ENCODE measurements at regions of chr5 and their contacts with region 1.

Region 1: DNA sequence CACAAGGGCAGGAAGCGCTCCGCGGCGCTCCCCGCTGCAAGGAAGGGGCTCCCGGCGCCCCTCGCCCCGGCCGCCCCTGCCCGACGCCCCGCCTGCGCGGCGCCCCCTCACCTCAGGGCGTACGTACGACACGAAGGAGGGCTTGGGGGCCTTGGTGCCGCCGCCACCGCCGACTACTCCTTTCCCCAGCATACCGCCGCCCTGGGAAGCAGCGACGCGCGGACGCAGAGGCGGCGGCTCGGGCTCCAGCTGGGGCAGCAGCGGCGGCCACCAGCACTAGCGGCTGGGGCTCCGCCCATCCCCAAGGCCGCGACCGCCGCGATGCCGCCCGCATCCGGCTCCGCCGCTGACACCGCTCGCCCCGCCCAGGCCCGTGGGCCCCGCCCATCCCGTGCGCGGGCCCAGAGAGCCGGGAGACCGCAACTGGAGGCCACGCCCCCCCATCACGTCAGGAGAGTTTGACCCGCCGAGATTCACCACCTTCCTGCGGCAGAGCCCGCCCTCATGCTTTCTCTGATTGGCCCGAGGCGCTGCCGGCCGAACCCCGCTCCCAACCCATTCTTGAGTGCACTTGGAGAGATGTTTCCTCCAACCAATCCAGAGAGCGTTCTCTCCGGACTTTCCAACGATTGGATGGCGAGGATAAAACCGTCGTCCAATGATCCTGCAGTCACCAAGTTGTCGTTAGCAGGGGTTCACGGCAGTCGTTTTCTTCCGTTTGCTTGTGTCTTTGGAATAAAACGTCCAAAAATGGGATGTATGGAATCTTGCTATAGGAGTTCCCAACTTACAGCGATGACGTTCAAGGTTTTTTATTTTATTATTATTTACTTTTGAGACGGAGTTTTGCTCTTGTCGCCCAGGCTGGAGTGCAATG is at the start of gene MTMR12:
- DNase-seq: peak; percentile 99 to 100 (median 100)
- H3K4me3 ChIP-seq: peak within 1 kb of the TSS; percentile 59 to 77
- H3K4me3 Mint-ChIP-seq: peak within 1 kb of the TSS; percentile 91 to 98 (median 94)
- H3K27ac ChIP-seq: peak within 1 kb of the TSS; percentile 67
- H3K27ac Mint-ChIP-seq: peak within 1 kb of the TSS; percentile 93 to 98 (median 97)
- H3K4me1 ChIP-seq: peaks cover 28% of the 10 kb centered on the region
- H3K4me1 Mint-ChIP-seq: peaks cover 24 to 50% (median 33%) of the 10 kb centered on the region in 4 donors
- H3K27me3 ChIP-seq: no peaks in the 10 kb centered on the region
- H3K27me3 Mint-ChIP-seq: no peaks in the 10 kb centered on the region
- total RNA-seq, gene MTMR12: 26.3 to 26.4 TPM

Region 2: DNA sequence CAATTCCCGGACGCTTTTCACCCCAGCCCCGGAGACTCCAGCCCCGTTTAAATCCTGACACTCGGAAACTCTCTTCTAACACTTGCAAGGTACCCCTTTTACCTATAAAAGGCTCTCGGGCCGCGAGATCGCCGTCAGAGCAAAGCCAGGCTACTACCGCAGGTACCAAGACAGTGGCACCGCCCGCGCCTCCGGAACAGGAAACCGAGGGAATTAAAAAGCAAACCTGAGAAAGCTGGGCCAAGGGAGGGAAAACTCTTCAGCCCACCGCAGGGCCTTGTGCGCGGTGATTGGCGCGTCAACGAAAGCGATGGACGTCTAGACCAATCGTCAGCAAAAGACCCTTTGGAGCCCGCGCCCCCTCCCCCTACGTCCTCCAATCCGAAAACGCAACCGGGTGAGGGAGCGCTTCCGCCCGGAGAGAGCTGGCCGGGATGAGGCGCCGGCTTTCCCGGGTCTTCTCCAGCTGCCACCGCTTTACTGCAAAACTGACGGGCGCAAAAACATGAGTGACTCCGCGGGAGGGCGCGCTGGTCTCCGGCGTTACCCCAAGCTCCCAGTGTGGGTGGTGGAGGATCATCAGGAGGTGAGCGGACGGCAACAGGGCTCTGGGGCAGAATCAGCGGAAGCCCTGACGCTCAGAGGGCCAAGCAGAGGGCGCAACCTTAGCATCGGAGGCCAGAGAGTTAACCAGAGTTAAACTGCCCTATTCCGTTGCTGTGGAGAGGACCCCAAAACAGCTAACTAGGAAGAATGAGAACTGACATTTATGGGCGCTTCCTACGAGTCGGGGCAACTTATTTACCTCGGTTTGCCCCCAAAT is 780.8 kb before region 1 on chr5 and contains the starts of genes C5orf22 and DROSHA:
- CTCF ChIA-PET with region 1: no interaction called
- POLR2A ChIA-PET with region 1: no interaction called
- intact Hi-C with region 1: loop called (anchors 1 kb)
- DNase-seq: peak; percentile 87 to 93 (median 88)
- H3K4me3 ChIP-seq: peak within 1 kb of the TSS; percentile 90 to 94
- H3K4me3 Mint-ChIP-seq: peak within 1 kb of the TSS; percentile 98 to 100 (median 98)
- H3K27ac ChIP-seq: peak within 1 kb of the TSS; percentile 67
- H3K27ac Mint-ChIP-seq: peak within 1 kb of the TSS; percentile 87 to 99 (median 96)
- H3K4me1 ChIP-seq: peaks cover 48% of the 10 kb centered on the region
- H3K4me1 Mint-ChIP-seq: peaks cover 35 to 76% (median 54%) of the 10 kb centered on the region in 4 donors
- H3K27me3 ChIP-seq: no peaks in the 10 kb centered on the region
- H3K27me3 Mint-ChIP-seq: no peaks in the 10 kb centered on the region
- total RNA-seq, gene C5orf22: 26.9 to 30.9 TPM
- total RNA-seq, gene DROSHA: 76.1 to 92.6 TPM

Region 3: DNA sequence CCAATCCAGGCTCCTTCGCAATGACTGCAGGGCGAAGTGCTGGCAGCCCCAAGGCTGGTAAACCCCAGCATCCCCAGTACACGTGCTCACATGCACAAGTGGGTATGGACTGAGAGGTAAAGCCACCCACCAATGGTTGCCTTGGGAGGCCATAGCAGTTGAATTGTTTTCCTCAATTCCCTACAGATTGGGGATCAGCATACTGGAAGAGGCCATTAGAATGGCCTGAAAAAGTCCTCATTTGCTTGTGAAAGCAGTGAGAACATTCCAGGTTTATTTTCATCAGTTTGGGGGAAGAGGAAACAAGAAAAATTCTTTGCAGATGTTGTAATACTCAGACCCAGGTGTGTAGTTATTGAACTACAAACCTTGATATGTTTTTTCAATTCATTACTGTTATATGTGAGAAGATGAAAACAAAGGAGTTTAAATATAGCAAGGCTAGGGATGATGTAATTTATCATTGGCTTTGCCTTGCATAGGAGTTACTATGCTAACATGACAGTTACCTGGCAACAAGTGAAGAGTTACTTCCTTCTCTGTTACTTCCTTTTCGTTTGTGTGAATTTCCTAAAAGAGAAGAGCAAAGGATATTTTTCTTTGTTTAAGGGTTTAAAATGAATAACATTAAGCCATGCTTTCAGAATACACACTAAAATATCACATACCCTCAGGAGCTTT is 36.6 kb before region 1 on chr5:
- CTCF ChIA-PET with region 1: no interaction called
- POLR2A ChIA-PET with region 1: no interaction called
- intact Hi-C with region 1: loop called (anchors 5 kb)
- DNase-seq: peak in 4 of 5 donors; percentile 15 to 40 (median 18)
- H3K4me3 ChIP-seq: no peak overlapping the region
- H3K4me3 Mint-ChIP-seq: peak overlapping the region in 4 of 8 donors; percentile 21 to 57 (median 27)
- H3K27ac ChIP-seq: no peak overlapping the region
- H3K27ac Mint-ChIP-seq: peak overlapping the region; percentile 64 to 89 (median 85)
- H3K4me1 ChIP-seq: peaks cover 38% of the 10 kb centered on the region
- H3K4me1 Mint-ChIP-seq: peaks cover 25 to 48% (median 34%) of the 10 kb centered on the region in 4 donors
- H3K27me3 ChIP-seq: no peaks in the 10 kb centered on the region
- H3K27me3 Mint-ChIP-seq: no peaks in the 10 kb centered on the region

Region 4: GRCh38 chr5:32394981-32395380 is 82.1 kb after region 1 on chr5:
- CTCF ChIA-PET with region 1: no interaction called
- POLR2A ChIA-PET with region 1: no interaction called
- intact Hi-C with region 1: no loop called
- DNase-seq: no peak
- H3K4me3 ChIP-seq: no peak overlapping the region
- H3K4me3 Mint-ChIP-seq: no peak overlapping the region
- H3K27ac ChIP-seq: no peak overlapping the region
- H3K27ac Mint-ChIP-seq: peak overlapping the region in 1 of 7 donors; percentile 25
- H3K4me1 ChIP-seq: no peaks in the 10 kb centered on the region
- H3K4me1 Mint-ChIP-seq: no peaks in the 10 kb centered on the region
- H3K27me3 ChIP-seq: no peaks in the 10 kb centered on the region
- H3K27me3 Mint-ChIP-seq: no peaks in the 10 kb centered on the region

Region 5: DNA sequence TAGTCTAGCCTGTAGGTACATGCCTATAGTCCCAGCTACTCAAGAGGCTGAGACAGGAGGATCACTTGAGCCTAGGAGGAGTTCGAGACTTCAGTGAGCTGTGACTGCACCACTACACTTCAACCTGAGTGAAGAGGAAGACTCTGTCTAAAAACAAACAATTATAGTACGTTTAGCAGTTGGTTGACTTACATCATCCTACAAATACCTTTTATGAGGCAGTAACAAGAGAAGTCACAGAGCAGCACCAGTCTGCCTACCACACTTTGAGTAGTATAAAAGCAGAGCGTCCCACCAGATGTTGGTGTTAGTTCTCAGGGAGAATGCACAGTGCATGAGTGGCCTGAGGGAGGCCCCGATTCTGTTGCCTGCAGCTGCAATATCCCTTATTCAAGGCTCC is 115.5 kb after region 1 on chr5:
- CTCF ChIA-PET with region 1: no interaction called
- POLR2A ChIA-PET with region 1: no interaction called
- intact Hi-C with region 1: no loop called
- DNase-seq: no peak
- H3K4me3 ChIP-seq: no peak overlapping the region
- H3K4me3 Mint-ChIP-seq: peak overlapping the region in 1 of 8 donors; percentile 4
- H3K27ac ChIP-seq: no peak overlapping the region
- H3K27ac Mint-ChIP-seq: peak overlapping the region in 1 of 7 donors; percentile 40
- H3K4me1 ChIP-seq: peaks cover 24% of the 10 kb centered on the region
- H3K4me1 Mint-ChIP-seq: peaks cover 39 to 67% (median 54%) of the 10 kb centered on the region in 4 donors
- H3K27me3 ChIP-seq: no peaks in the 10 kb centered on the region
- H3K27me3 Mint-ChIP-seq: no peaks in the 10 kb centered on the region

Region 6: GRCh38 chr5:32444431-32445286 is 131.8 kb after region 1 on chr5 and contains the start of gene ZFR:
- CTCF ChIA-PET with region 1: no interaction called
- POLR2A ChIA-PET with region 1: no interaction called
- intact Hi-C with region 1: loop called (anchors 1 kb)
- DNase-seq: peak; percentile 93 to 95 (median 95)
- H3K4me3 ChIP-seq: peak within 1 kb of the TSS; percentile 53 to 88
- H3K4me3 Mint-ChIP-seq: peak within 1 kb of the TSS; percentile 93 to 97 (median 94)
- H3K27ac ChIP-seq: peak within 1 kb of the TSS; percentile 90
- H3K27ac Mint-ChIP-seq: peak within 1 kb of the TSS; percentile 91 to 97 (median 96)
- H3K4me1 ChIP-seq: peaks cover 43% of the 10 kb centered on the region
- H3K4me1 Mint-ChIP-seq: peaks cover 19 to 40% (median 30%) of the 10 kb centered on the region in 4 donors
- H3K27me3 ChIP-seq: no peaks in the 10 kb centered on the region
- H3K27me3 Mint-ChIP-seq: no peaks in the 10 kb centered on the region
- total RNA-seq, gene ZFR: 60.1 to 65.4 TPM

Region 7: DNA sequence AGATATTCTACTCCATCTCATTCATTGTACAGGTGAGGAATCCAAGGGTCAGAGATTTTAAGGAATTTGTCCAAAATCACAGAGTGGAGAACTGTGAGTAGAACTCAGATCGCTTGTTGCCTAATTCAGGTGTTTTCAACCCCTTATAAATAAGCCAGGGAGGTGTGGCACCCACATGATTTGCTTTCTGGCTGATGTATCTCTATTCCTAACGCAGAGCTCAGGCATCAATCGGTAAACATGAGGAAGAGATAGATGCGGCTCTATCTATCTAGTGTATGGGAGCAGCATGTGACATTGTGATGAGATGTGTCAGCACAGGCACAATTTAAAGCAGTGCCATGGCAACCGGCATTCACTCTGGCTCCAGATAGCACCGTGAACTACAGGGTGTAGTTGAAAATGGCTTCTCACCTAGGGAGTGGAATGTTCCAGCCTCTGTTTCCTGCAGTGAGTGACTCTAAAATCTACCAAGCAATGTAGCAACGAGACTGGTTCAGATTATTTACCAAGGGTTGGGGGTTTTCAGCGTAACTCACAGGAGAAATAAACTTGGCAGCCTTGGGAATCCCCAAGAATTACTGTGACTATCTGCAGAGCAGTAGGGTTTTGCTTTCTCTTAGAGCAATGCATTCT is 219.1 kb after region 1 on chr5:
- CTCF ChIA-PET with region 1: no interaction called
- POLR2A ChIA-PET with region 1: interaction called, 3 read pairs
- intact Hi-C with region 1: loop called (anchors 10 kb)
- DNase-seq: peak; percentile 61 to 90 (median 69)
- H3K4me3 ChIP-seq: peak overlapping the region; percentile 42 to 68
- H3K4me3 Mint-ChIP-seq: peak overlapping the region; percentile 87 to 93 (median 90)
- H3K27ac ChIP-seq: peak overlapping the region; percentile 94
- H3K27ac Mint-ChIP-seq: peak overlapping the region; percentile 94 to 99 (median 97)
- H3K4me1 ChIP-seq: peaks cover 58% of the 10 kb centered on the region
- H3K4me1 Mint-ChIP-seq: peaks cover 37 to 66% (median 50%) of the 10 kb centered on the region in 4 donors
- H3K27me3 ChIP-seq: no peaks in the 10 kb centered on the region
- H3K27me3 Mint-ChIP-seq: no peaks in the 10 kb centered on the region